ENCODE measurements at regions of chr16 and their contacts with region 1.

Region 1: GRCh38 chr16:8797364-8798173 is at the starts of genes PMM2 and TMEM186:
- DNase-seq: peak; percentile 98
- H3K4me3 ChIP-seq: peak within 1 kb of the TSS; percentile 90
- H3K27ac ChIP-seq: peak within 1 kb of the TSS; percentile 39
- H3K4me1 ChIP-seq: peaks cover 32% of the 10 kb centered on the region
- CTCF ChIP-seq: no peak
- total RNA-seq, gene PMM2: 39.1 and 41.1 TPM in 2 replicates
- total RNA-seq, gene TMEM186: 8.5 and 11.7 TPM in 2 replicates

Region 2: GRCh38 chr16:8567750-8568617 is 229.6 kb before region 1 on chr16:
- CTCF ChIA-PET with region 1: no interaction called
- POLR2A ChIA-PET with region 1: no interaction called
- intact Hi-C with region 1: loop called (anchors 1 kb)
- DNase-seq: peak; percentile 91
- H3K4me3 ChIP-seq: no peak overlapping the region
- H3K27ac ChIP-seq: no peak overlapping the region
- H3K4me1 ChIP-seq: no peaks in the 10 kb centered on the region
- CTCF ChIP-seq: peak; percentile 99

Region 3: GRCh38 chr16:8660841-8661301 is 136.7 kb before region 1 on chr16:
- CTCF ChIA-PET with region 1: no interaction called
- POLR2A ChIA-PET with region 1: interaction called, 3 read pairs
- intact Hi-C with region 1: loop called (anchors 1 kb)
- DNase-seq: peak; percentile 59
- H3K4me3 ChIP-seq: no peak overlapping the region
- H3K27ac ChIP-seq: no peak overlapping the region
- H3K4me1 ChIP-seq: no peaks in the 10 kb centered on the region
- CTCF ChIP-seq: peak; percentile 73

Region 4: GRCh38 chr16:8868416-8869211 is 71.0 kb after region 1 on chr16 and contains the start of gene CARHSP1:
- CTCF ChIA-PET with region 1: no interaction called
- POLR2A ChIA-PET with region 1: interaction called, 11 read pairs
- intact Hi-C with region 1: loop called (anchors 1 kb)
- DNase-seq: peak; percentile 94
- H3K4me3 ChIP-seq: peak within 1 kb of the TSS; percentile 92
- H3K27ac ChIP-seq: peak within 1 kb of the TSS; percentile 89
- H3K4me1 ChIP-seq: peaks cover 63% of the 10 kb centered on the region
- CTCF ChIP-seq: no peak
- total RNA-seq, gene CARHSP1: 236 and 241 TPM in 2 replicates

Region 5: DNA sequence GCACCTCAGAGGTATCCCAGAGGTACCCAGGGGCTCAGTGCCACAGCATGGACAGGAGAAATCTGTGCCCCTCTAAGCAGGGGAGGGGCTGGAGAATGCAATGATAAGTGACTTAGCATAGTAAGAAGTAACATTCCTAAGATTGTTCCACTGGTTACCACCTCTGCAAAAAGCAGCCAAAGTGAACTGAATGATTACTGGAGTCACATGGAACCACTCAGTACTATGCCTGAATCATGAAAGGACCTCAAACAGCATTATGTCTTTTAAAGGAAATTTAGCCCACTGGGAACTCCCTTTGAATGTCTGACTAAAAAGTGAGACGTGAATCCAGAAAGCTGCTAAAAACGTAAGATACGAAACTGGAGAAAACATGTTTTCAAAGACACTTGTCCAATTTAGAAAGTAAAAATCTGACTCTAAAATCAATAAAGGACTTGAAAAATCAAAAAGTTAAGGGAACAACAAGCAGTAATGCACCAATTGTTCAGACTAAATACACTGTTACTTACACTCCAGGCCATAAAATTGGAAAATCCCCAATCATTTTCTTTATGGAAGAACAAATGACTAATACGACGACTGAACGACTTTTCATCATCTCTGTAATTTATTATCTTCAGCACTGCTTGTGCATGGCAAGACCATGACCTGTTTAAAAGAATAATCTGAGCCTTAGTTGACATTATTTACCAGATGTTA is 123.2 kb after region 1 on chr16:
- CTCF ChIA-PET with region 1: no interaction called
- POLR2A ChIA-PET with region 1: no interaction called
- intact Hi-C with region 1: no loop called
- DNase-seq: no peak
- H3K4me3 ChIP-seq: no peak overlapping the region
- H3K27ac ChIP-seq: no peak overlapping the region
- H3K4me1 ChIP-seq: no peaks in the 10 kb centered on the region
- CTCF ChIP-seq: no peak

Measured in OCI-LY7 (cell line).